B cell (primary cell): ENCODE measurements at regions of chr12 and their contacts with region 1.

Region 1: GRCh38 chr12:104215638-104216297 is at the start of gene TXNRD1:
- DNase-seq: peak; percentile 91
- ATAC-seq: peak; percentile 99
- H3K4me3 ChIP-seq: peak within 1 kb of the TSS; percentile 44 to 71 (median 61)
- H3K4me3 Mint-ChIP-seq: peak within 1 kb of the TSS; percentile 86
- H3K27ac ChIP-seq: peak within 1 kb of the TSS in 1 of 2 donors; percentile 55
- H3K27ac Mint-ChIP-seq: peak within 1 kb of the TSS; percentile 84
- H3K4me1 ChIP-seq: peaks cover 4 to 12% of the 10 kb centered on the region in 2 donors
- H3K4me1 Mint-ChIP-seq: peaks cover 15% of the 10 kb centered on the region
- H3K27me3 ChIP-seq: peaks cover 0 to 4% (median 1%) of the 10 kb centered on the region in 4 experiments
- H3K27me3 Mint-ChIP-seq: peaks cover 15% of the 10 kb centered on the region
- CTCF ChIP-seq: peak; percentile 91
- total RNA-seq, gene TXNRD1: 44.6 and 48.1 TPM in 2 replicates

Region 2: DNA sequence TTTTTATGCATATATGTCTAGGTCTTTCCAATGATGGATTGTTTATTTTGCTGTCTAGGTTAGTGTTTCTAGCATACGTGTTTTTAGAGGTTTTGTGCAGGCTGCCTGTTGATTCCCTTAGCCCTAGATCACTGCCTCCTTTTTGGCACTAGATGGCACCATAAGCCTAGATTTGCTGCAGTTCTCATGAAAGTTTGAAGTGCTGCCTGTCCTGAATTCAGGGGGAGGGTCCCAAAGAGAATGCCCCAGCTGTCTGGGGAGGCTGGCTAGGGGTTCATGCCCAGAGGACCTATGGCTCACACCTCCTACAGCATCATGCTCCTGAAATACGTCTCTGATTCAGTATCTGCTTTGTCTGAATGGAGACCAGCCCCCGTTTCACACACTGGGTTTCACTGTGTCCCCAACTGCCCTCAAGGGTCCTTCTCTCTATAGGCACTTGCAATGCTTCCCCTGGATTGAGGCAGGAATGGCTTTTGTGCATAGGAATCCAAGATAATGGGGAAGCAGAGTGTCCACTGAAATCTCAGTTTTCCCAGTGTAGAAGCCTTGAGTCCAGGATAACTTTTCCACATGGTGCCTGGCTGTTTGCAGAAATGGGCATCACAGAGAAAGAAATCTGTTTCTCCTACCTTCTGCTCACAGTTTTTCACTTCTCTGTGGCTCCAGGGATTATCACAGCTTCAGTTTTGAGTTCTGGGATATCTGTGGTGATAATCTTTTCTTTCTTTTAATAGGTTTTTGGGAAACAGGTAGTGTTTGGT is 14.3 kb before region 1 on chr12:
- CTCF ChIA-PET with region 1: interaction called, 4 read pairs
- POLR2A ChIA-PET with region 1: no interaction called
- intact Hi-C with region 1: loop called (anchors 1 kb)
- DNase-seq: peak; percentile 79
- ATAC-seq: peak; percentile 73
- H3K4me3 ChIP-seq: no peak overlapping the region
- H3K4me3 Mint-ChIP-seq: no peak overlapping the region
- H3K27ac ChIP-seq: no peak overlapping the region
- H3K27ac Mint-ChIP-seq: no peak overlapping the region
- H3K4me1 ChIP-seq: no peaks in the 10 kb centered on the region
- H3K4me1 Mint-ChIP-seq: peaks cover 1% of the 10 kb centered on the region
- H3K27me3 ChIP-seq: peaks cover 0 to 4% (median 1%) of the 10 kb centered on the region in 4 experiments
- H3K27me3 Mint-ChIP-seq: peaks cover 19% of the 10 kb centered on the region
- CTCF ChIP-seq: peak; percentile 89

Region 3: GRCh38 chr12:104226672-104227071 is 10.9 kb after region 1 on chr12:
- CTCF ChIA-PET with region 1: interaction called, 17 read pairs
- POLR2A ChIA-PET with region 1: no interaction called
- intact Hi-C with region 1: no loop called
- DNase-seq: no peak
- ATAC-seq: no peak
- H3K4me3 ChIP-seq: no peak overlapping the region
- H3K4me3 Mint-ChIP-seq: no peak overlapping the region
- H3K27ac ChIP-seq: no peak overlapping the region
- H3K27ac Mint-ChIP-seq: no peak overlapping the region
- H3K4me1 ChIP-seq: no peaks in the 10 kb centered on the region
- H3K4me1 Mint-ChIP-seq: no peaks in the 10 kb centered on the region
- H3K27me3 ChIP-seq: no peaks in the 10 kb centered on the region
- H3K27me3 Mint-ChIP-seq: peaks cover 18% of the 10 kb centered on the region
- CTCF ChIP-seq: no peak

Region 4: DNA sequence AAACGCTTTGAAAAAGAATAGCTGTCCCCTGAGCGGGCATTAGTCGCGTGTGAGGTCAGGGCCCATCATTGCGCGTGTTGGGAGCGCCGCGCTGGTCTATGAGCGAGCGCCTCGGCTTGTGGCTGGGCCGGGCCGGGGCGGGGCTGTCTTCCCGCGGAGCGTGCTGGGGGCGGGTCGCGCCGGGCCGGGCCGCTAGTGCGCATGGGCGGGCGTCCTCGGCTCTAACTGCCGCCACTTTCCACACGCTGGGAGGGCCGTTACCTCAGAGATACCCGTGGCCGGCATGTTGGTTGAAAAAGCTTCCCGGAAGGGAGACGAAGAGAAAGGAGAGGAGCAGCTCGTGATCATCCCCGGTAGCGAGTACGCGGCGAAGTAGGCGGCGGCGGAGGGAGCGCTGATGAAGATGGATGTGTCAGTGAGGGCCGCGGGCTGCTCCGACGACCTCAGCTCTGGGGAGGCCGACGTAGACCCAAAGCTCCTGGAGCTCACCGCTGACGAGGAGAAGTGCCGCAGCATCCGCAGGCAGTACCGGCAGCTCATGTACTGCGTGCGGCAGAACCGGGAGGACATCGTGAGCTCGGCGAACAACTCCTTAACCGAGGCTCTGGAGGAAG is 87.9 kb after region 1 on chr12 and contains the start of gene EID3:
- CTCF ChIA-PET with region 1: interaction called, 13 read pairs
- POLR2A ChIA-PET with region 1: interaction called, 3 read pairs
- intact Hi-C with region 1: loop called (anchors 2 kb)
- DNase-seq: peak; percentile 89
- ATAC-seq: peak; percentile 97
- H3K4me3 ChIP-seq: peak within 1 kb of the TSS; percentile 19 to 74 (median 62)
- H3K4me3 Mint-ChIP-seq: peak within 1 kb of the TSS; percentile 89
- H3K27ac ChIP-seq: peak within 1 kb of the TSS; percentile 54 to 74
- H3K27ac Mint-ChIP-seq: peak within 1 kb of the TSS; percentile 86
- H3K4me1 ChIP-seq: peaks cover 15 to 19% of the 10 kb centered on the region in 2 donors
- H3K4me1 Mint-ChIP-seq: peaks cover 52% of the 10 kb centered on the region
- H3K27me3 ChIP-seq: no peaks in the 10 kb centered on the region
- H3K27me3 Mint-ChIP-seq: no peaks in the 10 kb centered on the region
- CTCF ChIP-seq: no peak
- total RNA-seq, gene EID3: 9.2 and 9.4 TPM in 2 replicates

Region 5: DNA sequence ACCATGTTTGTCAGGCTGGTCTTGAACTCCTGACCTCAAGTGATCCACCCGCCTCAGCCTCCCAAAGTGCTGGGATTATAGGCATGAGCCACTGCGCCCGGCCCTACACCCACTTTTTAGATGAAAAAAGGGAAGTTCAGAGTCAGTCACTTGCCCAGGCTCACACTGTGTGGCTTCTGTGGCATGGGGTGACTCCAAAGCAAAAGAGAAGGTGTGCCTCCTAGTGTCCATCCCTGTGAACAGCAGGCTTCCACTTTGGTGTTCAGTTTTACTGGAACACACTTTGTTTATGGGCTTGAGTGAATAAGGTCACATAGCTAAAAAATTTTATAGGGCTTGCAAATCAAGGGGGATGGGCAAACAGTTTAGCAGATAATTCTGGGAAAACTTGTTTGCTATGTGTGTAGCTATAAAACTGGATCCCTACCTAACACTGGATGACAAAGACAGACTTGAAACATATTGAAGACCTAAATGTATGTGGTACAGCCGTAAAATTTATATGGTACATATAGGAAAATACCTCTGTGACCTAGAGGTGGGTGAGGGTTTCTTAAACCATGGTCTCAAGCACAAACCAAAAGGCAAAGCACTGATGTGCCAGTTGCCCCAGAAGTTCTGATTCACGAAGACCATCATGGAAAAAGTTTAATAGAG is 142.7 kb after region 1 on chr12:
- CTCF ChIA-PET with region 1: interaction called, 6 read pairs
- POLR2A ChIA-PET with region 1: no interaction called
- intact Hi-C with region 1: loop called (anchors 1 kb)
- DNase-seq: peak; percentile 82
- ATAC-seq: peak; percentile 97
- H3K4me3 ChIP-seq: no peak overlapping the region
- H3K4me3 Mint-ChIP-seq: no peak overlapping the region
- H3K27ac ChIP-seq: no peak overlapping the region
- H3K27ac Mint-ChIP-seq: no peak overlapping the region
- H3K4me1 ChIP-seq: no peaks in the 10 kb centered on the region
- H3K4me1 Mint-ChIP-seq: no peaks in the 10 kb centered on the region
- H3K27me3 ChIP-seq: no peaks in the 10 kb centered on the region
- H3K27me3 Mint-ChIP-seq: no peaks in the 10 kb centered on the region
- CTCF ChIP-seq: peak; percentile 76

Region 6: DNA sequence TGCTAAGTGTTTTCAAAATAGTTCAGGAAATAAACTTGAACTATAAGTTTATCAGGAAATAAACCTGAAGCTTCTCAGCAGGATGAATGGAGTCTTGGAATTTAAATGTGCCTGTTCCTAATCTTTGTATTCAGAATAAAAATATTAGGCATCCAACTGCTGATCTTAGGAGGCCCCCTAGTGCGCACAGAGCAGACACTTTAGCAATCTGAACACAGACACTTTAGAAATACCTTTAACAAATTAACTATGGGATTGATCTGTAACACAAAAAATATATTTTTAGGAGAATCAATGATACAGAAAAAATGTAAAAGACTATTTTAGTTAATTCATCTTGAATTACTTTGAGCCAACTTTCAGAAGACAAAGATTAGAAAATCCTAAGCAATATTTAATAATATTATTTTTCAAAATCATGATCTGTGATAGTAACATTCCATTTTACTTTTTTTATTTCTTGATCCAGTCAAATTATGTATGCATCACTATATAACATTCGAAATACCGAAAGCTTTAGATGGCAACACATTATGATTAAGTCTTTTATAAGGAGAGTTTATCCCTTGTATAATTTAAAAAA is 661.4 kb after region 1 on chr12:
- CTCF ChIA-PET with region 1: no interaction called
- POLR2A ChIA-PET with region 1: no interaction called
- intact Hi-C with region 1: loop called (anchors 1 kb)
- DNase-seq: peak; percentile 56
- ATAC-seq: no peak
- H3K4me3 ChIP-seq: no peak overlapping the region
- H3K4me3 Mint-ChIP-seq: no peak overlapping the region
- H3K27ac ChIP-seq: no peak overlapping the region
- H3K27ac Mint-ChIP-seq: no peak overlapping the region
- H3K4me1 ChIP-seq: no peaks in the 10 kb centered on the region
- H3K4me1 Mint-ChIP-seq: no peaks in the 10 kb centered on the region
- H3K27me3 ChIP-seq: no peaks in the 10 kb centered on the region
- H3K27me3 Mint-ChIP-seq: no peaks in the 10 kb centered on the region
- CTCF ChIP-seq: peak; percentile 70

Region 7: DNA sequence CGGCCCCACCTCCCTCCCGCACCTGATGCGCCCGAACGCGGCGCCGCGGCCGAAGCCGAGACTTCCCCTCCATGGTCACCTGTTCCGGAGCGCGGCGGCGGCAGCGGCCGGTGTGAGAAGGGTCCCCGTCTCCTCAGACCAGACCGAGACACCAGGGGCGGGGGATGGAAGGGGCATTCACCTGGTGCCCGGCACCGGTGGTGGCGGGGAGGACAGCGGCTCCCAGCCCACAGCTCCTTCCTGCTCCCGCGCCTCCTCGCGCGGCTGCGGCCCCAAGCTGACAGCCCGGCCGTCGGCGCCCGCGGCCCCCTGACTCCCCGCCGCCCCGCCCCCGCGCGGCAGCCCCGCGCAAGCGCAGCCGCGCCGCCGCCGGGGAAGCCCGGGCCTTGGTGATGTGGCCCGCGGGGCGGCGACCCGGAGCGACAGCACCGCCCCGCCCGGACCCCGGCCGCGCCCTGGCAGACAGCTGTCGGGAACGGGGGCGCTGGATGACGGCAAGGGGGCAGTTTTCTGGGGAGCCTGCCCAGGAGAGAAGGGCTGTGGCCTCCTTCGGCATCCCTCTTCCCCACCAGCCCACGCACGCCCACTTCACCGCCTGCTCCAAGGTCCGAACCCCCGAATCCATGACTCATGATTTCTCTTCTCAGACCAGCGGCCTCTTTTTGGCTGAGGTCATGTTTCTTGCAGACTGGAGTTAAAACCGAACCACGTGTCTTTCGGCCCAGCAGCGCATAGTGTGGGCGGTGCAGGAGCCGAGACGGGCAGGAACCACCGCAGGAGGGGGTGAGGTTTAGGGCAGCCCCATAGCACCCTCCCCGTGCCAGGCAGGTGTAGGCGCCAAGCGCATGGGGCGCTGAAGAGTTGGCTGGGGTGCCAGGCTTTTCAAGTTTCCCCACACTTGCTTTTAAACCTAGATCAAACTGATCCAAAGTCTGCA is 742.5 kb after region 1 on chr12 and contains the start of gene SLC41A2:
- CTCF ChIA-PET with region 1: no interaction called
- POLR2A ChIA-PET with region 1: no interaction called
- intact Hi-C with region 1: loop called (anchors 10 kb)
- DNase-seq: peak; percentile 91
- ATAC-seq: peak; percentile 84
- H3K4me3 ChIP-seq: peak within 1 kb of the TSS; percentile 57 to 80 (median 75)
- H3K4me3 Mint-ChIP-seq: peak within 1 kb of the TSS; percentile 95
- H3K27ac ChIP-seq: peak within 1 kb of the TSS; percentile 79 to 80
- H3K27ac Mint-ChIP-seq: peak within 1 kb of the TSS; percentile 93
- H3K4me1 ChIP-seq: peaks cover 13 to 16% of the 10 kb centered on the region in 2 donors
- H3K4me1 Mint-ChIP-seq: peaks cover 23% of the 10 kb centered on the region
- H3K27me3 ChIP-seq: peaks cover 0 to 2% (median 0%) of the 10 kb centered on the region in 4 experiments
- H3K27me3 Mint-ChIP-seq: peaks cover 6% of the 10 kb centered on the region
- CTCF ChIP-seq: peak; percentile 48
- total RNA-seq, gene SLC41A2: 13.0 TPM in 2 replicates